GM10248 (cell line): ENCODE measurements at regions of chr3 and their contacts with region 1.

Region 1: DNA sequence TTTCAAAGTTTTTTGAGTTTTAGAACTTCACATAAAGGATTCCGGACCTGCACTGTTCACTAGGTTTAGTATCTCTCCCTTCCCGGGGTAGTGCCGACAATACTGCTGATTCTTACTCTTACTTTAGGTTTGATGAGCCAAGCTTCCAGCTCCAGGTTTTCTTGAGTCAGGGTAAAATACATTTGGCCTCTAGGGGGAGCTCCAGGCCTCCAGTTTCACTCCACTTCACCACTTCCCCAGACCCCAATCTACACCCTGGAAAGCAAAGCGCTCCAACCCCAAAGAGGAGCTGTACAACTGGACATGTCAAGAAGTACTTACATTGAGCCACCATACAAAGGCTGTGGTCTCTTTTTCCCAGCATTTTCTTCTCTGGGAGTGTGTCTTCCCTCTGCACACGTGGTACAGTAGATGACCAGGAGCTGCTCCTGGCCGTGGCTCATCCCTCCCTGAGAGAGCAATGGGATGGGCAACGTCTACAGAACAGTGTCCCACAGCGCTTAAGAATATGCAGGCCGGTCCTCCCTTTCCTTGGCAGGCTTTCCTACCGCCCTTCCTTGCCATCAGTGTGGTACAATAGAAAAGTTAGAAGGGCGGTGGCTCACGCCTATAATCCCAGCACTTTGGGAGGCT is 93.9 kb upstream of the CCDC80 start:
- DNase-seq: peak; percentile 65
- CTCF ChIP-seq: peak; percentile 51

Region 2: DNA sequence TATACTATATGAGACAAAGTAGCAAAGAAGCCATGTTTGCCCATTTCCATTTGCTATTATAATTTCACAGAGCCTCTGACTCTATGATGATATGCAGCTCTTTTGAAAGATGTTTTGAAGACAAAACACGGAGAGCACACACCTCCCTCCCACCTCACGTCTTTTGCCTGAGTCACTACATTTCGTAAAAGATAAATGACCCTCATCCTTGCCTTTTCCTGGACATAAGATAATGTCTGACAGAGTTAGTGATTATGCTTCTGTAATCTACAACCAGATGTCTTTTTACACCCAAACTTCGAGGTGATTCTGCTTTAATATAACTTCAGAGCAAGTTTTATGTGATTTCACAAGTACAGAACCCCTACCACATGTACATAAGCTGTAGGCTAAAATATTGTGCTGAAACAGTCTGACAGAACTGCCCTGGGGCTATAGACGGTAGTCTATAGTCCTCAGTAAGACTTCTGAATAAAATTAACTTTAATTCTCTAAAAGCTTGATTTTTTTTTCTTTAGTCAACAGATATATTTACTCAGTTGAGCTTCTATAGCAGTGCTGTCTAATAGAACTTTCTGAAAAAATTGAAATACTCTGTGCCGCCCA is 11.9 kb after region 1 on chr3:
- CTCF ChIA-PET with region 1: interaction called, 65 read pairs
- POLR2A ChIA-PET with region 1: no interaction called
- DNase-seq: no peak
- CTCF ChIP-seq: no peak

Region 3: DNA sequence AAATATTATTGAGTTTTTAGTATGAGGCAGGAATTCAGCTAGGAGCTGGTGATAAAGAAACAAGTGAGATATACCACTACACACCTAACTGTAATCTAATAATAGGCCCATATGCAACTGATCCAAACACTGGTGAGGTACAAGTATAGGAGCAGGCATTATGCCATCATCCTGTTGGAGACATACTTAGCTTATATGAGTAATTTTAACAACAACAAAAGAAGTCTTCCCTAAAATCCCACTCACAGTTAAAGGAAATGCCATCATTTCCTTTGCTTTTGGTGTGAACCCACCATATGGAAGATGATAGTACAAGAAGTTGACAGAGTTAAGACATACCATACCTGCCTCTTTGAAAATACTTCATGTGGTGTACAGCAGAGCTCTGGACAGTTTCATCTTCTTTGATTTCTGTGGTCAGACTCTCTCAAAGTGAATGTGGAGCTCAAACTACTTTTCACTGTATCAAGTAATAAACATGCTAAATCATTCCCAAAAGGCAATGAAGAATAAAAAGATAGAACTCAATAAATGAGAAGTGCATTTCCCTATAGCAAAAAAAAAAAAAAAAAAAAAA is 26.3 kb after region 1 on chr3:
- CTCF ChIA-PET with region 1: interaction called, 22 read pairs
- POLR2A ChIA-PET with region 1: no interaction called
- DNase-seq: no peak
- CTCF ChIP-seq: no peak

Region 4: GRCh38 chr3:112979240-112979832 is 244.5 kb after region 1 on chr3:
- CTCF ChIA-PET with region 1: interaction called, 79 read pairs
- POLR2A ChIA-PET with region 1: no interaction called
- DNase-seq: no peak
- CTCF ChIP-seq: peak; percentile 40

Region 5: GRCh38 chr3:112990672-112991602 is 256.1 kb after region 1 on chr3 and contains the start of gene GTPBP8:
- CTCF ChIA-PET with region 1: interaction called, 18 read pairs
- POLR2A ChIA-PET with region 1: no interaction called
- DNase-seq: peak; percentile 85
- CTCF ChIP-seq: no peak

Region 6: GRCh38 chr3:113035387-113035982 is 300.7 kb after region 1 on chr3:
- CTCF ChIA-PET with region 1: interaction called, 18 read pairs
- POLR2A ChIA-PET with region 1: no interaction called
- DNase-seq: peak; percentile 68
- CTCF ChIP-seq: peak; percentile 79

Region 7: DNA sequence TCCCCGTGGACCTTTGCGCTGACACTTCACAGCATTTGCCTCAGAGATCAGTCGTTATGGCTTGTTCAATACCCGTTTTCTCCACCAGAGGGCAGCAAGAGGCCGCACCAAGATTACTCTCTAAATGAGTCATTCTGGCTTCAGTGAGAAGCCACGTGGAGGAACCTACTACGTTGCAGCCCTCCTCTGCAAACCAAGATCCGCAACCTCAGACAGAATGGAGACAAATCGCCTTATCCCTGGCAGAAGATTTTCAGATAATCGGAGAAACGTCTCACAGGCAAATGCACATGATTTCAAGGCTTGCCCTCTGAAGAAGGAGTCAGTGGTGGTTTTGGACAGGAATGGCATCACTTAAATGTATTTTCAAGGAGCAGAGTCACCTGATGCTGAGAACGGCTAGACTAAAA is 316.5 kb after region 1 on chr3:
- CTCF ChIA-PET with region 1: no interaction called
- POLR2A ChIA-PET with region 1: no interaction called
- DNase-seq: peak; percentile 77
- CTCF ChIP-seq: peak; percentile 69